Cardiac septum (tissue), 1 donor: ENCODE measurements at regions of chr1 and their contacts with region 1.

Region 1: DNA sequence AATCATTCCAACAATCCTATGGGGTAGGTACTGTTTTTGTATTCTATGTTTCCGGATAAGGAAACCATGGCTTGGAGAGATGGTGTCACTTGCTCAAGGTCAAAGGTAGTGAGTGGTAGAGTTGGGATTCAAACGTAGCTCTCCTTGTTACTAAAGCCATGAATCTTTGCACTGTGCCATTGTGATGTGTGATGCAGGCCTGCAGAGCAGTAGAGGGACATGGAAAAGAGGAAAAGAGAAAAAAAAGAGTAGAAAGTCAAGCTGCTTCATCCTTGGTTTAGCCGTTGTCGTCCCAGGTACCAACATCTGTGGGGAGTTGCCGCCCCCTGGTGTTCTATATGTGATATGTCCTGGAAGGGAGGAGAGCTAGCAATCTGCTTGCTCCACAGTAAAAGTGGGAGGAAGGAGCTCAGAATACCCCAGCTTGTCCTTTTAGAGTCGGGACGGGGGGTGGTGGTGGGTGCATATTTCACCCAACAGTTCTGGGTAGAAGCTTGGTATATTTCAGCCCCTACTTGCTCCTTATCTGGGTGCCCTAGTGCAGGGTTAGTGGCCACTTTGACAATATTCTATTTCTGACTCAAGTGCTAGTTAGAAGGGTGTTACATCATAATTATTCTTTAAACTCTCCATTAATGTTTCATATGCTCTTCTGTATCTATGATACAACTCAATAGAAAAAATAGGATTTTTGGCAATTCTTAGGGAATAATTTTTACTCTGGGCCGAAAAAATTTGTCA is 98.4 kb downstream of the EBNA1BP2 start:
- DNase-seq: peak; percentile 87

Region 2: GRCh38 chr1:42777852-42778251 is 295.8 kb before region 1 on chr1:
- intact Hi-C with region 1: loop called (anchors 2 kb)
- DNase-seq: no peak

Region 3: DNA sequence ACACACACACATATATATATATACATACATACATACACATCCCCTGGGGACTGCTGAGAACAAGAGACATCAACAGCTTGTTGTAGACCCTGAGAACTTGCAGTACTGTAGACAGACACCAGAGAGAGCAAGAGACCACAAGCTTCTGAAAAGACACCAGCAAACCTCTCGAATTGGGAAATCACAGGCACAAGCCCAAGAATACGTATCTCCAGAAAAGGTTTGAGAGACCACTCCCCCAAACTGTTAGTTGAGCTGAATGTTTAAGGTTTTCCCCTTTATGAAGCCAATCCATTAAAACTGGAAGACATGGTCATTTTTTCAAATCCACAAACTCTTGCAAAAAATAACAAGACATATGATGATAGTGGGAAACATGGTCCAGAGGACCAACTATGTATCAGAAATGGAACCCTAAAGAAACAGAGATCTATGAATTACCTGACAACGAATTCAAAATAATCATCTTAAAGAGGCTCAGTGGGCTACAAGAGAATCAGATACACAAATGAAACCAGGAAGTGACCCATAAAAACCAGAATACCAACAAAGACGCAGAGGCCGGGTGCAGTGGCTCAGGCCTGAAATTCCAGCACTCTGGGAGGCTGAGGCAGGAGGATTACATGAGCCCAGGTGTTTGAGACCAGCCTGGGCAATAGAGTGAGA is 160.1 kb before region 1 on chr1:
- intact Hi-C with region 1: loop called (anchors 1 kb)
- DNase-seq: no peak

Region 4: GRCh38 chr1:43048601-43049011 is 25.1 kb before region 1 on chr1:
- intact Hi-C with region 1: no loop called
- DNase-seq: no peak

Region 5: DNA sequence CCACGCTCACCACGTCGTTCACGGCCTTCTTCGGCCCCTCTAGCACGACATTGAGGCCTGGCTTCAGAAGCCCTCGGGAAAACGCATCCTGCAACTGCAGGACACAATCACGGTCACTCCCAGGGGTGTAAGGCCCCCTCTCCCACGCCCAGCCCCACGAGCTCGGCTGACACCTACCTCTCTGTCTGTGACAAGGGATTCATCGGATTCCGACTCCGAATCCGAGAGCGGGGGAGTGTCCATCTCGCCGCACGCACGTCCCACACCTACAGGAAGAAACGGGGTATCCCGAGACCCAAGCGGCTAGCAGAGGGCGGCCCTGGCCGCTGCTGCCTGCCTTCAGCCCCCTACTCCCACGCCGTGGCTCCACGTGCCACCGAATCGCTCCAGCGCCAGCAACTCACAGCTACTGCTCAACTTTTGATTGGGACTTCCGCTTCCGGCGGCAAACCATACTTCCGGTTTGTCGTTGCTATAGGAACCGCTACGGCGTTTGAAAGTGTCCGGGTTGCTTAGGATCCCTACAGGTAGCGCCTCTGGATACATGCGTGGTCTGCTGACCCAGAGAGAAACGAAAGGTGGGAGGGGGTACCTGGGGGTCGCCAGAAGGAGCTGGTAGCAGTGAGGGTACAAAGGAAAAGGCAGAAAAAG is 98.3 kb after region 1 on chr1 and contains the starts of genes CFAP57 and EBNA1BP2:
- intact Hi-C with region 1: no loop called
- DNase-seq: peak; percentile 95
- total RNA-seq, gene CFAP57: 0.13 TPM
- total RNA-seq, gene EBNA1BP2: 26.7 TPM

Region 6: DNA sequence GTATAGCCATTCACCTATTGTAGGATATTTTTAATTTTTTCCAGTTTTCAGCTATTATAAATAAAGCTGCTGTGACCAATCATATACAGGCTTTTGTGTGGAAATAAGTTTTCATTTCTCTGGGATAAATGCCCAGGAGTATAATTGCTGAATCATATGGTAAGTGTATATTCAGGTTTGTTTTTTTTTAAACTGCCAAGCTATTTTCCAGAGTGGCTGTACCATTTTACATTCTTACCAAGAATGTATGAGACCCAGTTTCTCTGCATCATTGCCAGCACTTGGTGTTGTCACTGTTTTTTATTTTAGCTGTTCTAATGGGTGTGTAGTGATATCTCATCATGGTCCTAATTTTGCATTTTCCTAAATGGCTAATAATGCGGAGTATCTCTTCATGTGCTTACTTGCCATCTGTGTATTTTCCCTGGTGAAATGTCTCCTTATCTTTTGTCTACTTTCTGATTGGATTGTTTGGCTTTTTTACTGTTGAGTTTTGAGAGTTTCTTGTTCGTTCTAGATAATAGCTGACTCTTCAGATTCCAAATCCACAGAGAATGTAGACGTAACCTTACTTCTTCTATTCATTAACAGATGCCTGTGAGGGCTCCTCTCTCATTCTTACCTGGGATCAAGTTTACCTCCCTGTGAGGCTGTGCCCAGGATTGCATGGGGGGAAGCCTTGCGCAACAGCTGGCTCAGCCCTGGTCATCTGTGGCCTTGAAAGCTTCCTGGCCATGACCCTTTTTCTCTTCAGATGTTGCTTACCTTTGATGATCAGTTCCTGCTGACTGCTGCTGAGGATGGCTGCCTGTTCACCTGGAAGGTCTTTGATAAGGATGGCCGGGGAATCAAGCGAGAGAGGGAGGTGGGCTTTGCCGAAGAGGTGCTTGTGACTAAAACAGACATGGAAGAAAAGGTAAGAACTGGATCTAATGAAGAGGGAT is 141.1 kb after region 1 on chr1:
- intact Hi-C with region 1: no loop called
- DNase-seq: no peak